ENCODE measurements at regions of chr20 and their contacts with region 1.

Region 1: DNA sequence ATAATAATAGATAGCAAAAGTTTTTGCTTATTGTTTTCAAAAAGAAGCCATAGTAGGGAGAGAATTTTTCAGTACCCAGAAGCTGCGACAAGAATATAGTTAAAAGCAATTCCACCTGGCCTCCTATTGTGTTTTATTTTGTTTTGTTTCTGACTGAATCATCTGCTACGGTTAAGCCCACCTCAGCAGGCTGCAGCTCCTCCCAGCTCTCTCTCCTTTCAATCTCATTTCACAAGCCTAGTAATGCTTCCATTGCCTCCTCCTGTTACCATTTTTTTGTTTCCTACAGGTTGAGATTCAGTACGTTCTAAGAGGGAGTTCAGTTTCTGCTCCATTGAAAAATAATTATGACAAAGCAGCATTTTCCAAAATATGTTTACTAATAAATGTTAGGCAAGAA is 77.9 kb downstream of the PCSK2 start:
- DNase-seq: no peak
- H3K4me3 ChIP-seq: no peak overlapping the region
- H3K27ac ChIP-seq: no peak overlapping the region
- H3K4me1 ChIP-seq: no peaks in the 10 kb centered on the region
- H3K27me3 ChIP-seq: no peaks in the 10 kb centered on the region
- CTCF ChIP-seq: no peak
- EP300 ChIP-seq: no peak
- POLR2A ChIP-seq: no peak

Region 2: GRCh38 chr20:16589625-16590024 is 715.1 kb before region 1 on chr20:
- in situ Hi-C with region 1: no loop called
- intact Hi-C with region 1: no loop called
- DNase-seq: no peak
- H3K4me3 ChIP-seq: no peak overlapping the region
- H3K27ac ChIP-seq: no peak overlapping the region
- H3K4me1 ChIP-seq: peaks cover 0 to 5% (median 0%) of the 10 kb centered on the region in 4 donors
- H3K27me3 ChIP-seq: no peaks in the 10 kb centered on the region
- CTCF ChIP-seq: no peak
- EP300 ChIP-seq: no peak
- POLR2A ChIP-seq: no peak

Region 3: GRCh38 chr20:16885746-16886145 is 419.0 kb before region 1 on chr20:
- in situ Hi-C with region 1: no loop called
- intact Hi-C with region 1: no loop called
- DNase-seq: no peak
- H3K4me3 ChIP-seq: no peak overlapping the region
- H3K27ac ChIP-seq: no peak overlapping the region
- H3K4me1 ChIP-seq: no peaks in the 10 kb centered on the region
- H3K27me3 ChIP-seq: no peaks in the 10 kb centered on the region
- CTCF ChIP-seq: no peak
- EP300 ChIP-seq: no peak
- POLR2A ChIP-seq: no peak

Region 4: GRCh38 chr20:17327185-17328148 is 22.7 kb after region 1 on chr20:
- in situ Hi-C with region 1: no loop called
- intact Hi-C with region 1: loop called (anchors 1 kb)
- DNase-seq: no peak
- H3K4me3 ChIP-seq: no peak overlapping the region
- H3K27ac ChIP-seq: no peak overlapping the region
- H3K4me1 ChIP-seq: no peaks in the 10 kb centered on the region
- H3K27me3 ChIP-seq: peaks cover 19% of the 10 kb centered on the region
- CTCF ChIP-seq: no peak
- EP300 ChIP-seq: no peak
- POLR2A ChIP-seq: no peak

Measured in transverse colon (tissue), 4 donors.